ENCODE measurements at regions of chr6 and their contacts with region 1.

Region 1: GRCh38 chr6:33585403-33586107 is 5.5 kb upstream of the BAK1 start:
- DNase-seq: no peak
- H3K4me3 ChIP-seq: peak overlapping the region; percentile 8; the same call in 1 of the 2 replicates
- CTCF ChIP-seq: peak; percentile 95

Region 2: GRCh38 chr6:33599413-33599911 is 13.9 kb after region 1 on chr6:
- CTCF ChIA-PET with region 1: interaction called, 27 read pairs
- POLR2A ChIA-PET with region 1: no interaction called
- DNase-seq: no peak
- H3K4me3 ChIP-seq: no peak overlapping the region
- CTCF ChIP-seq: no peak

Region 3: GRCh38 chr6:33613795-33614168 is 28.2 kb after region 1 on chr6:
- CTCF ChIA-PET with region 1: interaction called, 25 read pairs
- POLR2A ChIA-PET with region 1: no interaction called
- DNase-seq: peak; percentile 10
- H3K4me3 ChIP-seq: no peak overlapping the region
- CTCF ChIP-seq: no peak

Region 4: DNA sequence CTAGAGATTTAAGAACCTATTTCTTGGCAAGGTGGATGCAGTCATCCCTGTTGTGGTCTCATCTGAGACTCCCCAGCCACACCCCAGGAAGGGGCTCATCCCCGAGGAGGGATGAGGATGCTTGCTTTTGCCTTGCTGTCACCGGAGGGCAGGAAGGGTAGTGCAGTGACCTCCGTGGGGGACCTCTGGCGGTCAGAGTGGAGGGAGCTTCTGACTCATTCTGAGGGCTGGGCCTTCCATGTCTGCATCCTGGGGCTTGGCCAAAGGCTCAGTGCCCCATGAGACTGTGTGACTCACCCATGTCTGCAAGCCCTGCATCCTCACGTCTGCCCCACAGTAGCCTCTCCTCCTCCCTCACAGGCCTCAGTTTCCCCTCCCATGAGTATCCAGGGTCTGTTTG is 87.3 kb after region 1 on chr6:
- CTCF ChIA-PET with region 1: interaction called, 75 read pairs
- POLR2A ChIA-PET with region 1: no interaction called
- DNase-seq: peak; percentile 78
- H3K4me3 ChIP-seq: no peak overlapping the region
- CTCF ChIP-seq: peak; percentile 71

Region 5: DNA sequence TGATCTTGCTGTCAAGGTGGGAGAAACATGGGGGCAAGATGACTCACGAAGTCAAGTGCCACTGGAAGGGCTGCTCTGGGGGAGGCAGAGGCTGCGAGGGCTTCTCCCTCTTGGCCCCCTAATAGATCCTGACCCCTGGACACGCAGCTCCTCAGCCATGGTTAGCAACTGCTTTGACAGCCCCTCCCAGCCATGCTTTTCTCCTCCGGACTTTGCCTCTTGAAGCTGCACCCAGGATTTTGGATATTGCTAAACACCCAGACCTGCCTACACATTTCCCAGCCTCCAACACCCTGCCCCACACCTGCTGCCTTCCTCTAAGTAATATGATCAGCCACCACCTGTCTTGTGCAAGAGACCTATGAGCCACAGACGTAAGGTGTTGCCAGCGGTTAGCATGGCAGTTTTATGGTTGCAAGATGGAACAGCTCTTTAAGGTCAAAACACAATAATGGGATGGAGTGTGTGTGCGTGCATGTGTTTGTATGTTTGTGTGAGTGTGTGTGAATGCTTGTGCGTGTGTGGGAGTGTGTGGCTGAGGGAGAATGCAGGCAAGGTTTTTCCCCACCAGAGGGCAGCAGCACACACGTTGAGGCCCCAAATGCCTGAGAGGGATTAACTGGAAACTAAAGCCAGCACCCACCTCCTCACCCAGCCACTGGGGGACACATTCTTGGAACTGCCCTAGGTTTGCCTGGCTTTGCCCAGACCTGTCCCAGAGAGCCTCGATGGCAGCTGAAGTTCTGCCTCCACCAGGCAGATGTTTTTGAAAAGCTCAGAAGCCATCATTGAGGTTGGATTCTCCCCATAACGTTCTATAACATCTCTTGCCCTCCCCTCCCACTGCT is 158.7 kb after region 1 on chr6:
- CTCF ChIA-PET with region 1: interaction called, 23 read pairs
- POLR2A ChIA-PET with region 1: no interaction called
- DNase-seq: no peak
- H3K4me3 ChIP-seq: no peak overlapping the region
- CTCF ChIP-seq: peak; percentile 90

Region 6: DNA sequence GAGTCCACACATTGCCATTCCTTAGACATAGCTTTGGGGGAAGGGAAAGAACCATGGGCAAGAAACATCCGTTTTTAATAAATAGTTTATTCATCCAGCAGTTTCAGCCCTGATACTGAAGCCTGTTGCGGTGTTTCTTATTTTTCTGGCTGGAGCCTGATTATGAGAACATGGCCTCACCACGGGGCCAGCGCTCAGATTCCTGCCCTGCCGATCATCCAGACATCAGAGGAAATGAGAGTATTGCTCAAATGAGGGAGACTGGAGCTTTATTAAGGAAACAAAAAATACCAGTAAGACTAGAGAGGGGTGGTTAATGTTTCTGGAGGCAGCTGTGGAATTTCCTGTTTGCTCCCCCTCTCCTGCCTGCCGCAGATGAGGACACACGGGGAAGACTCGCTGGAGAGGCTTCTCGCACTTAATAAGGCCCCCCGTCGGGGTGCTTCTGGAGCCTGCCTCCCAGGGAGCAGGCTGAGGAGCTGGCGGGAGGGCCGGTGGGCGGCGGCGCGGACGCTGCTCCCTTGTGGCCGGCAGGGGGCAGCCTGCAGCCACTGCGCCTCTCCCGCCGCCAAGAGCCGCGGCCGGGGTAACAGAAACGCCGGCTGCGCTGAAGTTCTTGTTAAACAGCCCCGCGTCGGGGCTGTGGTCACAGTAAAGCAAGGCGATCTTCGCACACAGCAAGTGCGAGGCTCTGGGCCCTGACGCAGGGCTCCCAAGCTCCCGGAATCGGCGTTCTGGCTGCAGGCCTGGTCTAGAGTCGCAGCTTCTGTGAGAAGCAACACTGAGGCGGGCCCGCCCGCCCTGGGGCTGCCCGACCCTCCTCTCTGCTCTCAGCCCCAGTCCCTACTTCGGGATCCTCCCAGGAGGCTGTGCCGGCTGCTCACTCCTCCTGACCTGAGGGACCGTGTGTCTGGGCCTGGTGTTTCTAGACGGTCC is 185.9 kb after region 1 on chr6:
- CTCF ChIA-PET with region 1: interaction called, 19 read pairs
- POLR2A ChIA-PET with region 1: no interaction called
- DNase-seq: peak; percentile 98
- H3K4me3 ChIP-seq: peak overlapping the region; percentile 23; the same call in 1 of the 2 replicates
- CTCF ChIP-seq: peak; percentile 92

Measured in AG04449 (cell line).